CD8-positive, alpha-beta T cell (primary cell): ENCODE measurements at regions of chr5 and their contacts with region 1.

Region 1: DNA sequence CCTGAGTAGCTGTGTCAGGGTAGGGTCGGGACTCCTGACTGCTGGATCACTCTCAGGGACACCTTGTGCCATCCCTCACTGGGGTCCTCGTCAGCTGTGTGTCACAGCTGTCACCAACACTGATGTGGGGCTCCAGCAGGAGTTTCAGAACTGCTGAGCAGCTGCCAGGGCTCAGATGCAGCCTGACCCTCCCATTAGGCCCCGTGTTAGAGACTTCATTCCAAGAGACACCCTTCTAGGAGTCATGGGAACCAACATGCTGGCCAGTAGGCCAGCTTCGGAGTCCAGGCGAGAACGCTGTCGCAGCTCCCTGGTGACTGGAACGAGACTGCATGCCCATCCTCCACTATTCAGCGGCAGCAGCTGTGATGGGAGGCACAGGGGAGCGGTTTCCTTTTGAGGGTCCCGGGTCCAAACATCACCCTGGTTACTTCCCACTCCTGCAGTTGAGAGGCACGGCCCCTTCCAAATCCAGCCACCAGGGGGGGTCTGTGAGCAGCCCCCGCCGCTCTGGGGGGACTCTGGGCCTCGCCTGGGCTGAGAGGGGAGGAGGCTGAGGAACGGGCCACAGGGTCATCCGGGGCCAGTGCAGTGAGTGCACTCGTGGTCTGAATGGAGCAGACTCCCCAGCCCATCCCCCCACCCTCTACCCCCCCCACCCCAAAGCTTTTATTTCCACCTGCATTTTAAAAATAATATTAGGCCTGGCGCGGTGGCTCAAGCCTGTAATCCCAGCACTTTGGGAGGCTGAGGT is 12.6 kb upstream of the TCF7 start:
- DNase-seq: peak; percentile 68 to 90 (median 79)
- ATAC-seq: peak; percentile 30
- H3K4me3 ChIP-seq: peak overlapping the region in 1 of 2 experiments; percentile 12
- H3K4me3 Mint-ChIP-seq: peak overlapping the region; percentile 22
- H3K27ac ChIP-seq: peak overlapping the region; percentile 24 to 28
- H3K27ac Mint-ChIP-seq: peak overlapping the region; percentile 96
- H3K4me1 ChIP-seq: peaks cover 93% of the 10 kb centered on the region
- H3K4me1 Mint-ChIP-seq: peaks cover 87% of the 10 kb centered on the region
- H3K27me3 ChIP-seq: no peaks in the 10 kb centered on the region
- H3K27me3 Mint-ChIP-seq: no peaks in the 10 kb centered on the region
- CTCF ChIP-seq: peak; percentile 84

Region 2: GRCh38 chr5:134053840-134054338 is 48.0 kb before region 1 on chr5:
- CTCF ChIA-PET with region 1: interaction called, 10 read pairs
- POLR2A ChIA-PET with region 1: interaction called, 7 read pairs
- intact Hi-C with region 1: no loop called
- DNase-seq: peak in 1 of 9 experiments; percentile 56
- ATAC-seq: peak; percentile 82
- H3K4me3 ChIP-seq: no peak overlapping the region
- H3K4me3 Mint-ChIP-seq: peak overlapping the region; percentile 44
- H3K27ac ChIP-seq: no peak overlapping the region
- H3K27ac Mint-ChIP-seq: peak overlapping the region; percentile 87
- H3K4me1 ChIP-seq: peaks cover 49% of the 10 kb centered on the region
- H3K4me1 Mint-ChIP-seq: peaks cover 52% of the 10 kb centered on the region
- H3K27me3 ChIP-seq: no peaks in the 10 kb centered on the region
- H3K27me3 Mint-ChIP-seq: no peaks in the 10 kb centered on the region
- CTCF ChIP-seq: no peak

Region 3: DNA sequence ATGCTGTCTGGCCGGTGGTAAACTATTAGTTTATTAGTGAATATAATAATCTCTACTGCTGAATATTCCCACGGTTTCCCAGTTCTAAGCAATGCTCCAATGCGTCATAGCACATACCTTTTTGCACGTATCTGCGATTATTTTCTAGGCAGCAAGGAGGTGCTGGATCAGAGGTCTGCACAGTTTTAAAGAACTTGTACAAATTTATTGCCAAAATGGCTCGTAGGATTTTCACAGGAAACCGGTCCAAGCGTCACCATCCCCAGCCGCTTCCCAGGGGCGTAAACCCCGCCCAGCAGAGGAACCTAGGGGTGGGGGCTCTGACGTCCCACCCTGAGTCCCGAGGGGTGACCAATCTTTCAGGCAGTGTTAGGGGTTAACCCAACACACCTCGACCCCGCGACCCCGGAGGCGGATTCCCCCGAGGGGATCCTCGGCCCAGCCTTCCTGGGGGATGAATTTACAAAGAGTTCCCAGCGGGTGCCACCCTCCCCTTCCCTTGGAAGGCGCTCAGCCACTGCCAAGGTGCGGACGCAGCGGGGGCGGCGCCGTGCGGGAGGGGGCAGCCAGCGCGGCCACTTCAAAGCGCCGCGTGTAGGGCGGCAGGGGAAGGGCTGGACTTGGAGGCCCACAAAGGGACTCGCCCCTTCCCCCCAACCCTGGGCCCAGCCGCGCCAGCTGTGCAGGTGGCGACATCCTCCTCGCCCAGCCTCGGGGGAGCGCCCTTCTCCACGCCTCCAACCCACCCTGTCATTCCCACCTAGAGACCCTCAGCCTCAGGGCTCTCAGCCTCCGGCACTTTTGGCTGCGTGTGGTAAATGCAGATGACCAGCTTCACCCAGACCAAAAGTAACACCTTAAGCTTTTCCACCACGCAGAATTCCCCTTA is 30.9 kb before region 1 on chr5:
- CTCF ChIA-PET with region 1: interaction called, 30 read pairs
- POLR2A ChIA-PET with region 1: interaction called, 5 read pairs
- intact Hi-C with region 1: loop called (anchors 2 kb)
- DNase-seq: peak in 5 of 9 experiments; percentile 32 to 59 (median 42)
- ATAC-seq: peak; percentile 53
- H3K4me3 ChIP-seq: peak overlapping the region; percentile 40 to 44
- H3K4me3 Mint-ChIP-seq: peak overlapping the region; percentile 79
- H3K27ac ChIP-seq: no peak overlapping the region
- H3K27ac Mint-ChIP-seq: peak overlapping the region; percentile 92
- H3K4me1 ChIP-seq: peaks cover 67% of the 10 kb centered on the region
- H3K4me1 Mint-ChIP-seq: peaks cover 69% of the 10 kb centered on the region
- H3K27me3 ChIP-seq: peaks cover 0 to 3% of the 10 kb centered on the region in 2 experiments
- H3K27me3 Mint-ChIP-seq: no peaks in the 10 kb centered on the region
- CTCF ChIP-seq: peak; percentile 13

Region 4: GRCh38 chr5:134077926-134078580 is 23.8 kb before region 1 on chr5:
- CTCF ChIA-PET with region 1: interaction called, 30 read pairs
- POLR2A ChIA-PET with region 1: interaction called, 4 read pairs
- intact Hi-C with region 1: no loop called
- DNase-seq: peak in 3 of 9 experiments; percentile 41 to 52 (median 48)
- ATAC-seq: peak; percentile 27
- H3K4me3 ChIP-seq: no peak overlapping the region
- H3K4me3 Mint-ChIP-seq: peak overlapping the region; percentile 44
- H3K27ac ChIP-seq: no peak overlapping the region
- H3K27ac Mint-ChIP-seq: peak overlapping the region; percentile 97
- H3K4me1 ChIP-seq: peaks cover 76% of the 10 kb centered on the region
- H3K4me1 Mint-ChIP-seq: peaks cover 73% of the 10 kb centered on the region
- H3K27me3 ChIP-seq: no peaks in the 10 kb centered on the region
- H3K27me3 Mint-ChIP-seq: no peaks in the 10 kb centered on the region
- CTCF ChIP-seq: no peak

Region 5: GRCh38 chr5:134086943-134087305 is 14.9 kb before region 1 on chr5:
- CTCF ChIA-PET with region 1: interaction called, 28 read pairs
- POLR2A ChIA-PET with region 1: no interaction called
- intact Hi-C with region 1: loop called (anchors 1 to 2 kb)
- DNase-seq: peak; percentile 51 to 88 (median 81)
- ATAC-seq: peak; percentile 68
- H3K4me3 ChIP-seq: peak overlapping the region in 1 of 2 experiments; percentile 5
- H3K4me3 Mint-ChIP-seq: peak overlapping the region; percentile 64
- H3K27ac ChIP-seq: peak overlapping the region; percentile 16 to 28
- H3K27ac Mint-ChIP-seq: peak overlapping the region; percentile 89
- H3K4me1 ChIP-seq: peaks cover 87% of the 10 kb centered on the region
- H3K4me1 Mint-ChIP-seq: peaks cover 85% of the 10 kb centered on the region
- H3K27me3 ChIP-seq: peaks cover 0 to 2% of the 10 kb centered on the region in 2 experiments
- H3K27me3 Mint-ChIP-seq: no peaks in the 10 kb centered on the region
- CTCF ChIP-seq: no peak

Region 6: DNA sequence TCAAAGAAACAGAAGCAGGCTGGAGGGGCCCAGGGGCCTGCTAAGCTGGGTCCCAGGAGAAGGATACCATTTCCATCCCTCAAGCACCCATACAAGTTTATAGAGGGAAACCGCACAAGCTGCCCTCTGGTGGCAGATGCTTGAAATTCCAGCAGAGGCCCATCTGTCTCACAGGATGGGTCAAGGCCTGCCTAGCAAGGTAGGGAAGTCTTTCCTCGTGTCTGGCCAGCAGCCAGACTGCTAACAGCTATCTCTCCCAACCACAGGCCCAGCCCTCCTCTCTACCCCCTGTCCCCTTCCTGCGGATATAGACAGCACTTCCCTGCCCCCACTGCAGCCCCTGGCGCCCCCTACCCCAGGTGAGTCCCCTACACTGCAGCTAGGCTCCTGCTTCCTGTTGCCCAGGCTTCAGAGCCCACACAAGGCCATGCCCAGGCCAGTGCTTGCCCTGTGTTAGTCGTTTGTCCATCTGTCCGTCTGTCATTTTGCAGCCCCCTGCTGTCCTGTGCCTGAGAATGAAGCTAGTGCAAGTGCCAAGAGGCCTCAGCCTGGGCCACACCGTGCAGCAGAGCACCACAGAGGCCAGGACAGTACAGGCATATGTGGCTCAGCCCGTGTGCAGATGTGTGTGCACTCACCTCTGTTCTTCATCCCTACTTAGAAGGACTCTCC is 38.8 kb after region 1 on chr5:
- CTCF ChIA-PET with region 1: no interaction called
- POLR2A ChIA-PET with region 1: no interaction called
- intact Hi-C with region 1: loop called (anchors 1 to 2 kb)
- DNase-seq: peak in 7 of 9 experiments; percentile 3 to 83 (median 67)
- ATAC-seq: peak; percentile 39
- H3K4me3 ChIP-seq: no peak overlapping the region
- H3K4me3 Mint-ChIP-seq: peak overlapping the region; percentile 22
- H3K27ac ChIP-seq: peak overlapping the region; percentile 30 to 88
- H3K27ac Mint-ChIP-seq: peak overlapping the region; percentile 96
- H3K4me1 ChIP-seq: peaks cover 58% of the 10 kb centered on the region
- H3K4me1 Mint-ChIP-seq: peaks cover 80% of the 10 kb centered on the region
- H3K27me3 ChIP-seq: no peaks in the 10 kb centered on the region
- H3K27me3 Mint-ChIP-seq: no peaks in the 10 kb centered on the region
- CTCF ChIP-seq: peak; percentile 76